ENCODE measurements at regions of chr7 and their contacts with region 1.

Region 1: GRCh38 chr7:87152107-87152844 is at the start of gene DMTF1:
- DNase-seq: peak; percentile 94
- ATAC-seq: peak; percentile 83
- H3K4me3 ChIP-seq: peak within 1 kb of the TSS; percentile 75 to 97 (median 88)
- H3K4me3 Mint-ChIP-seq: peak within 1 kb of the TSS; percentile 88
- H3K27ac ChIP-seq: peak within 1 kb of the TSS; percentile 87 to 99
- H3K27ac Mint-ChIP-seq: peak within 1 kb of the TSS; percentile 91
- H3K4me1 ChIP-seq: peaks cover 27 to 45% of the 10 kb centered on the region in 2 donors
- H3K4me1 Mint-ChIP-seq: peaks cover 46% of the 10 kb centered on the region
- H3K27me3 ChIP-seq: no peaks in the 10 kb centered on the region
- H3K27me3 Mint-ChIP-seq: no peaks in the 10 kb centered on the region
- CTCF ChIP-seq: no peak
- total RNA-seq, gene DMTF1: 235 and 264 TPM in 2 replicates

Region 2: GRCh38 chr7:85554236-85555178 is 1597.8 kb before region 1 on chr7:
- CTCF ChIA-PET with region 1: no interaction called
- POLR2A ChIA-PET with region 1: no interaction called
- intact Hi-C with region 1: no loop called
- DNase-seq: peak; percentile 58
- ATAC-seq: peak; percentile 43
- H3K4me3 ChIP-seq: no peak overlapping the region
- H3K4me3 Mint-ChIP-seq: no peak overlapping the region
- H3K27ac ChIP-seq: no peak overlapping the region
- H3K27ac Mint-ChIP-seq: no peak overlapping the region
- H3K4me1 ChIP-seq: no peaks in the 10 kb centered on the region
- H3K4me1 Mint-ChIP-seq: no peaks in the 10 kb centered on the region
- H3K27me3 ChIP-seq: no peaks in the 10 kb centered on the region
- H3K27me3 Mint-ChIP-seq: no peaks in the 10 kb centered on the region
- CTCF ChIP-seq: peak; percentile 84

Region 3: GRCh38 chr7:86926732-86927131 is 225.5 kb before region 1 on chr7:
- CTCF ChIA-PET with region 1: interaction called, 60 read pairs
- POLR2A ChIA-PET with region 1: no interaction called
- intact Hi-C with region 1: loop called (anchors 1 kb)
- DNase-seq: peak; percentile 56
- ATAC-seq: peak; percentile 41
- H3K4me3 ChIP-seq: no peak overlapping the region
- H3K4me3 Mint-ChIP-seq: no peak overlapping the region
- H3K27ac ChIP-seq: no peak overlapping the region
- H3K27ac Mint-ChIP-seq: no peak overlapping the region
- H3K4me1 ChIP-seq: peaks cover 4 to 6% of the 10 kb centered on the region in 2 donors
- H3K4me1 Mint-ChIP-seq: peaks cover 8% of the 10 kb centered on the region
- H3K27me3 ChIP-seq: no peaks in the 10 kb centered on the region
- H3K27me3 Mint-ChIP-seq: no peaks in the 10 kb centered on the region
- CTCF ChIP-seq: peak; percentile 81

Region 4: GRCh38 chr7:86939197-86939814 is 213.0 kb before region 1 on chr7:
- CTCF ChIA-PET with region 1: interaction called, 54 read pairs
- POLR2A ChIA-PET with region 1: no interaction called
- intact Hi-C with region 1: loop called (anchors 1 kb)
- DNase-seq: peak; percentile 59
- ATAC-seq: peak; percentile 49
- H3K4me3 ChIP-seq: no peak overlapping the region
- H3K4me3 Mint-ChIP-seq: no peak overlapping the region
- H3K27ac ChIP-seq: no peak overlapping the region
- H3K27ac Mint-ChIP-seq: no peak overlapping the region
- H3K4me1 ChIP-seq: no peaks in the 10 kb centered on the region
- H3K4me1 Mint-ChIP-seq: no peaks in the 10 kb centered on the region
- H3K27me3 ChIP-seq: no peaks in the 10 kb centered on the region
- H3K27me3 Mint-ChIP-seq: no peaks in the 10 kb centered on the region
- CTCF ChIP-seq: peak; percentile 53

Region 5: DNA sequence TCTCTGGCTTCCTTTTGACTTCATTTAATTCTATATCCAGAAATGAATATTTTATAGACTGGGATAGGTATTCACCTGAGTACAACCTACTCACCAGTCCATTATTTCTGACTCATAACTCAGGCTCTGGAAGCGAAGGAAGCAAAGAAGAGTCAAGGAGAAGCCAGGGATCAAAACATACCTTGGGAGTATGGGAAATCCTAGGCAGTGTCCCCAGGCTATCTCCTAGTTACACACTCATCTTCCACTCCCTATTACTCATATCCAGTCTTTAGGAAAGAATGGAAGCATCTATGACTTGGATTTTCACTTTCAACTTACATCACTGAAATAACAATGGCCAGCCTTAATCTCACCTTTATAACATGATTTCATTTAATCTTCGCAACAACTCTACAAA is 52.0 kb before region 1 on chr7:
- CTCF ChIA-PET with region 1: no interaction called
- POLR2A ChIA-PET with region 1: no interaction called
- intact Hi-C with region 1: no loop called
- DNase-seq: no peak
- ATAC-seq: no peak
- H3K4me3 ChIP-seq: no peak overlapping the region
- H3K4me3 Mint-ChIP-seq: no peak overlapping the region
- H3K27ac ChIP-seq: no peak overlapping the region
- H3K27ac Mint-ChIP-seq: no peak overlapping the region
- H3K4me1 ChIP-seq: no peaks in the 10 kb centered on the region
- H3K4me1 Mint-ChIP-seq: no peaks in the 10 kb centered on the region
- H3K27me3 ChIP-seq: peaks cover 0 to 4% (median 2%) of the 10 kb centered on the region in 4 experiments
- H3K27me3 Mint-ChIP-seq: peaks cover 13% of the 10 kb centered on the region
- CTCF ChIP-seq: no peak

Region 6: GRCh38 chr7:87345166-87345927 is 193.1 kb after region 1 on chr7 and contains the start of gene CROT:
- CTCF ChIA-PET with region 1: no interaction called
- POLR2A ChIA-PET with region 1: no interaction called
- intact Hi-C with region 1: loop called (anchors 1 kb)
- DNase-seq: peak; percentile 94
- ATAC-seq: peak; percentile 98
- H3K4me3 ChIP-seq: peak within 1 kb of the TSS; percentile 51 to 86 (median 73)
- H3K4me3 Mint-ChIP-seq: peak within 1 kb of the TSS; percentile 97
- H3K27ac ChIP-seq: peak within 1 kb of the TSS; percentile 67 to 74
- H3K27ac Mint-ChIP-seq: peak within 1 kb of the TSS; percentile 94
- H3K4me1 ChIP-seq: peaks cover 6 to 15% of the 10 kb centered on the region in 2 donors
- H3K4me1 Mint-ChIP-seq: peaks cover 27% of the 10 kb centered on the region
- H3K27me3 ChIP-seq: no peaks in the 10 kb centered on the region
- H3K27me3 Mint-ChIP-seq: no peaks in the 10 kb centered on the region
- CTCF ChIP-seq: no peak
- total RNA-seq, gene CROT: 12.4 and 13.3 TPM in 2 replicates

Region 7: DNA sequence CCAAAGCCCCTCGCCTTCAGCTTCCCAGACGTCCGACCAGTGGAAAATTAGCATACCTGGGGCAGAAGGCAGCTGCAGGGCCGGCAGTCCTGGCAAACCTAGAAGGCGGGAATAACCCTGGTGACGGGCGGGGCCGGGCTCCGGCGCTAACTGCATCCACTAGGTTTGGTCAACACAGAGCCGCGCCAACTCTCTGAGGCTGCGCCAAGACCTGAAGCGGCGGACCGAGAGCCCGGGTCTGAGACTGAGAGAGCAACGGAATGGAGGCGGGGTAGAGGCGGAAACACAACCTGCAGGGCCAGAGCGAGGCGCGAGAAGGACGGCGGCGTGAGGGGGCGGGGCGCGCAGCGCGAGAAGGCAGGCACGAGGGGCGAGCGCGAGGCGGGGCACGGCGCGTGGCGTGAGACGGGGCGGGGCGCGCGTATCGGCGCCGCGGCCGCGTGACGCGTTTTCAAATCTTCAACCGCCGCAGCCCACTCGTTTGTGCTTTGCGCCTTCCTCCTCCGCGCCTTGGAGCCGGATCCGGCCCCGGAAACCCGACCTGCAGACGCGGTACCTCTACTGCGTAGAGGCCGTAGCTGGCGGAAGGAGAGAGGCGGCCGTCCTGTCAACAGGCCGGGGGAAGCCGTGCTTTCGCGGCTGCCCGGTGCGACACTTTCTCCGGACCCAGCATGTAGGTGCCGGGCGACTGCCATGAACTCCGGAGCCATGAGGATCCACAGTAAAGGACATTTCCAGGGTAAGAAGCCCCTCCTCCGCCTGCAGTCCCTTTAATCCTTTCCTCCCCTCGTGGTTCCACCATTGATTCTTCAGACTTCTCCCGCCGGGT is 724.0 kb after region 1 on chr7 and contains the starts of genes DBF4 and SLC25A40:
- CTCF ChIA-PET with region 1: no interaction called
- POLR2A ChIA-PET with region 1: no interaction called
- intact Hi-C with region 1: loop called (anchors 1 kb)
- DNase-seq: peak; percentile 98
- ATAC-seq: peak; percentile 92
- H3K4me3 ChIP-seq: peak within 1 kb of the TSS; percentile 73 to 98 (median 93)
- H3K4me3 Mint-ChIP-seq: peak within 1 kb of the TSS; percentile 76
- H3K27ac ChIP-seq: peak within 1 kb of the TSS; percentile 83 to 93
- H3K27ac Mint-ChIP-seq: peak within 1 kb of the TSS; percentile 98
- H3K4me1 ChIP-seq: peaks cover 18 to 24% of the 10 kb centered on the region in 2 donors
- H3K4me1 Mint-ChIP-seq: peaks cover 37% of the 10 kb centered on the region
- H3K27me3 ChIP-seq: no peaks in the 10 kb centered on the region
- H3K27me3 Mint-ChIP-seq: no peaks in the 10 kb centered on the region
- CTCF ChIP-seq: no peak
- total RNA-seq, gene DBF4: 21.0 and 27.6 TPM in 2 replicates
- total RNA-seq, gene SLC25A40: 28.1 and 34.5 TPM in 2 replicates

Measured in B cell (primary cell).